ENCODE measurements at regions of chr1 and their contacts with region 1.

Region 1: DNA sequence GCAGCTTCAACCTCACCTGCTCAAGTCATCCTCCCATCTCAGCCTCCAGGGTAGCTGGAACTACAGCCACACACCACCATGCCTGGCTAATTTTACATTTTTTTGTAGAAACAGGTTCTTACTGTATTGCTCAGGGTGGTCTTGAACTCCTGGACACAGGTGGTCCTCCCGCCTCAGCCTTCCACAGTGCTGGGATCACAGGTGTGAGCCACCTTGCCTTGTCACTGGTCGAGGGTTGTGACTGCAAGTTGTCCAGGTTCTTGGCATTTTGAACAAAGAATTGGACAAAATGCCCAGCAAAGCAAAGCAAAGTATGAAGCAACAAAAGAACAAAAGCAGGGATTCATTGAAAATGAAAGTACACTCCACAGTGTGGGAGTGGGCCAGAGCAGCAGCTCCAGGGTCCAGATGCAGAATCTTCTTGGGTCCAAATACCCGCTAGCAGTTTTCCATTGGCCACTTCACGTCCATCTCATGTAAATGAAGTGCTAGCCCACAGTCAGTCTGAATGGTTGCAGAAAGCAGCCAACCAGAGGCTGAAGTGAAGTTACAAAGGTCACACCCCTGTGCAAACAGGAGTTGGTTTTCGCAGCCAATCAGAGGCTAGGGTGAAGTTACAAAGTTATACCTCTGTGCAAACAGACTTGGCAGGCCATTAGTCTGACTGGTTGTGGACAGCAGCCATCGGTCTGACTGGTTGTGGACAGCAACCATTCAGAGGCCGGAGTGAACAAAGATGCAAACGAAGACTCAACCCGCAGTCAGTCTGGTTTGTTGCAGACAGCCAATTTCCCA is 109.5 kb upstream of the KIF26B start:
- DNase-seq: no peak
- ATAC-seq: peak in 1 of 2 donors; percentile 60

Region 2: GRCh38 chr1:244599937-244600350 is 445.3 kb before region 1 on chr1:
- intact Hi-C with region 1: loop called in 1 of 2 experiments (anchors 10 kb)
- DNase-seq: peak; percentile 23
- ATAC-seq: peak in 1 of 2 donors; percentile 93

Region 3: DNA sequence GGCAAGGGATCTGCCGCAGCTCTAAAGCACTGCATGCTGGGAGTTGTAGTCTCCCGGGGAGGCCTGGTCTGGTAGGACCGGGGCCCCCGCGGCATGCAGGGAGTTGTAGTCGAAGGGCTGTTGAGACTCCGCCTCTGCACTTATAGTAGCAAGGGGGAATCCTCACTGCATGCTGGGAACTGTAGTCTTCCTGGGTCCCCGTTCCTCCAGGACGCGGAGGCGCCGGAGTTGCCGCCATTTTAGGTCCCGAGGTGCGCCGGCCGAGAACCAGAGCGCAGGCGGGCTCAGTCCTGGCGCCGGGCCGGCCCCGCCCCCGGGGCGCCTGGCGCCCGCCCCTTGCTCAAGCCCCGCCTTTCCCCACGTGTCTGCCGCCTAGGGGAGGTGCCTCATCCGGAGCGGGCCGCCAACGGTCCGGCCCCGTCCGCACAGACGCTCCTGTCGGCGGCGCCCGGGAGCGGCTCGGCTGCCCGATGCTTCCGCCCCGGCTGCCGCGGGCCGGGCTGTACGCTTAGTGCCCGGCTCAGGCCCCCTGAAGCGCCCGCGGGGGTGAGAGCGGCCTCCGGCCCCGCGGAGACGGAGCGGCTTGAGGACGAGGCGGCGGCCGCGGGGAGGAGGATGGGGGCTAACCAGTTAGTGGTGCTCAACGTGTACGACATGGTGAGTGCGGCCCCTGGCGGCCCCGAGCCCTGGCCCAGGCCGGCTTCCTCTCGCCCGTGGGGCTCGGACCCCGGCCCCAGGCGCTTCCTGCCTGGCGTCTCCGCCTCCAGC is 392.4 kb before region 1 on chr1 and contains the start of gene DESI2:
- intact Hi-C with region 1: no loop called
- DNase-seq: peak; percentile 99
- ATAC-seq: peak; percentile 97
- total RNA-seq, gene DESI2: 20.0 to 22.2 TPM

Region 4: GRCh38 chr1:244796718-244797406 is 248.4 kb before region 1 on chr1:
- intact Hi-C with region 1: loop called in 1 of 2 experiments (anchors 2 kb)
- DNase-seq: peak; percentile 50
- ATAC-seq: peak; percentile 53 to 58

Region 5: DNA sequence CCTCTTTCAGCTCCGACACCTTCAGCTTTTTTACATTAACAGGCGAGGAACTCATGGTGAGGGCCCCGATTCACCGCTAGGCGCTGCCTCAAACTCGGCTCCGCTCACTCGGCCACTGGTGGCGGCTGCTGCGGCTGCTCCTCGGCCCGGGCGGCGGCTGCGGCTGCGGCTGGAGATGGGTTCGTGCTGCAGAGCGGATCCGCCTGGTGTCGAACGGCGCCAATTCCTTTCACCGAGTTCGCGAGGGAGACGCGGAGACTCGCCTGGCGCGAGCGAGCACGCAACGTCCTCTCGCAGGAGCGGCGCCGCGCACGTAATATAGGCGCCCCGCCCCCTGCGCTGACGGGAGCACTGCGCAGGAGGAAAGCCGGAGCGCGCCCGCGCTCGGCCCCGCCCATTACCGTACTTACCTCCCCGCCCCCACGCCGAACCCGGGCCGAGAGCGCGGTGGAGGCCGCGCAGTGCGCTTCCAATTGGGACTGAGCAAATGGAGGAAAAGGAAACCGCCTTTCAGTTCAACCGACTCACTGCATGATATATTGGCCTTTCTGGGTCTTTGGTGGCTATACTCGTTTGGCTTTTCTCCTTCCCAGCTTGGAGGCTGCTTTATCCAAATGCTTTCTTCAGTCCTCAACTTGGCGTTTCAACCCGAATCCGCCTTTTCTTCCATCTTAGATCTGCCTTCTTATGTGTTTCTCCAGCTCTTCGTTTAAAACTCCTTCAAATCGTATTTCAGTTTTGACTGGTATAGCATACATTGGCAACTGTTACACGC is 180.8 kb before region 1 on chr1 and contains the start of gene HNRNPU:
- intact Hi-C with region 1: loop called in 1 of 2 experiments (anchors 5 kb)
- DNase-seq: peak; percentile 98
- ATAC-seq: peak; percentile 90 to 92
- total RNA-seq, gene HNRNPU: 167 to 204 TPM

Region 6: DNA sequence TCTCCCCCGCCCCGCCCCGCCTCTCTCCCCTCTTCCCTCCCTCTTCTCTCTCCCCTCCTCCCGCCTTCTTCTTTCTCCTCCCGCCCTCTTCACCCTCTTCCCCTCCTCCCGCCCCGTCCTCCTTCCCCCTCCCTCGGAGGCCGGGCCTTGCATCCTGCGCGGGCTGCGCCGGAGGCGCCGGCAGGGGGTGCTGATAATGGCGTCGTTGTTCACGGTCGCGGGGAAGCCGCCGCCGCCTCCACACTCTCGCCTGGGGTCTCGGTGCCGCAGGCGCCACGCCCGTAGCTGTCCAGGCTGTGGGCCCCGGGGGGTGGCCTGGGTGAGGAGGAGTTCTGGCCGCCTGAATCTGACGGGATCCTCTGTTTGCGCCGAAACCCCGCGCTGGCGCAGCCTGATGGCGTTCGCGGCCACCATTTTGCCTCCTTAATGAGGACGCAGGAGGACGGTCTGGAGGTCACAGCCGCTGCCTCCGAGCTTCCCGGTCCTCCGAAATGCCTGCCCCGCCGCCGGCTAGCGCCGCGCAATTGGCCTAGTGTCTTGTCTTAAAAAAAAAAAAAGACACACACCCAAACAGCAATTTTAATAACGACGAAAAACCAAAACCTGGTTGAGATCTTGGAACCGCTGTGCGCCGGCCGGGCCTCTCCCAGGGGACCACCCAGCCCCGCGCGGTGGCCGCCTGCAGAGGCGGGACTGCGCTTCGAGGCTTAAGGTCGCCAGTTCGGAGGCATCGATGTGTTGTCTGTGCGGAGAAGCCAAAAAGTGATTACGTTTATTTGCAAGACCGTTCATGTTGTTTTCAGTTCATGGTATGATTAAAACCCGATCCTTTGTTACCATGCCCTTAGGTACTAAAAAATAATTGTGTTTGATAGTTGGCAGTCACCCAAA is 74.4 kb before region 1 on chr1:
- intact Hi-C with region 1: loop called in 1 of 2 experiments (anchors 5 kb)
- DNase-seq: peak; percentile 93
- ATAC-seq: peak; percentile 89 to 94

Measured in left cardiac atrium (tissue), 4 donors.